ENCODE measurements at regions of chr2 and their contacts with region 1.

Region 1: DNA sequence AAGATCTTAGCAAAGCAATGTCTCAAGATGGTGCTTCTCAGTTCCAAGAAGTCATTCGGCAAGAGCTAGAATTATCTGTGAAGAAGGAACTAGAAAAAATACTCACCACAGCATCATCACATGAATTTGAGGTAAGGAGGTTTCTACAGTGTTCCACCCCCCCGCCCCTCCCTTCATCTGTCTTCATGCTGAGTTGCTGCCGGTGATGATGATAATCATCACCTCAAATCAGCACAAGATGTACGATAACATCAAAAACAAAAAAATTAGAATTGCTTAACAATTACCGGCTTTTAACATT is 14.6 kb downstream of the UGP2 start:
- DNase-seq: peak; percentile 72
- H3K4me3 Mint-ChIP-seq: peak overlapping the region; percentile 64
- H3K27ac Mint-ChIP-seq: peak overlapping the region; percentile 97
- H3K4me1 Mint-ChIP-seq: peaks cover 81% of the 10 kb centered on the region
- H3K27me3 Mint-ChIP-seq: no peaks in the 10 kb centered on the region

Region 2: DNA sequence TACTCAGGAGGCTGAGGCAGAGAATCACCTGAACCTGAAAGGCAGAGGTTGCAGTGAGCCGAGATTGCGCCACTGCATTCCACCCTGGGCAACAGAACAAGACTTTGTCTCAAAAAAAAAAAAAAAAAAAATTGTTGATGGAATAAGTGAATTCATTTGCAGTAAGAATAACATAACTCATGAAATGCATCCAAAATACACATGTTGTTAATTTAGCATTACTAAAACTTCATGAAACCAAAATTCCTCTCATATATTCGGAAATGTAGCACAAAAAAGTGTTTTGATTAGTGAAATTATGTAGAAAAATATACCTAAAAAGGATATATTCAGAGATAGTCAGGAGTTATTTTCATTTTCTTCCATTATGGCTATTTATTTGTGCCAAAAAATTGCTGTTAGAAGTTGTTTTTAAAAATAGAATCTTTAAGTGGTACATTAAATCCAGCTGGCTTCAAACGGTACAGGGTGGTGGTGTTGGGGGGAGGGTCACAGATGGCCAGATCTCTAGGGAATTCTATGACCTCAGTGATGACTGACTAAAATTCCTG is 92.8 kb before region 1 on chr2:
- CTCF ChIA-PET with region 1: no interaction called
- POLR2A ChIA-PET with region 1: no interaction called
- DNase-seq: no peak
- H3K4me3 Mint-ChIP-seq: no peak overlapping the region
- H3K27ac Mint-ChIP-seq: no peak overlapping the region
- H3K4me1 Mint-ChIP-seq: no peaks in the 10 kb centered on the region
- H3K27me3 Mint-ChIP-seq: no peaks in the 10 kb centered on the region

Region 3: DNA sequence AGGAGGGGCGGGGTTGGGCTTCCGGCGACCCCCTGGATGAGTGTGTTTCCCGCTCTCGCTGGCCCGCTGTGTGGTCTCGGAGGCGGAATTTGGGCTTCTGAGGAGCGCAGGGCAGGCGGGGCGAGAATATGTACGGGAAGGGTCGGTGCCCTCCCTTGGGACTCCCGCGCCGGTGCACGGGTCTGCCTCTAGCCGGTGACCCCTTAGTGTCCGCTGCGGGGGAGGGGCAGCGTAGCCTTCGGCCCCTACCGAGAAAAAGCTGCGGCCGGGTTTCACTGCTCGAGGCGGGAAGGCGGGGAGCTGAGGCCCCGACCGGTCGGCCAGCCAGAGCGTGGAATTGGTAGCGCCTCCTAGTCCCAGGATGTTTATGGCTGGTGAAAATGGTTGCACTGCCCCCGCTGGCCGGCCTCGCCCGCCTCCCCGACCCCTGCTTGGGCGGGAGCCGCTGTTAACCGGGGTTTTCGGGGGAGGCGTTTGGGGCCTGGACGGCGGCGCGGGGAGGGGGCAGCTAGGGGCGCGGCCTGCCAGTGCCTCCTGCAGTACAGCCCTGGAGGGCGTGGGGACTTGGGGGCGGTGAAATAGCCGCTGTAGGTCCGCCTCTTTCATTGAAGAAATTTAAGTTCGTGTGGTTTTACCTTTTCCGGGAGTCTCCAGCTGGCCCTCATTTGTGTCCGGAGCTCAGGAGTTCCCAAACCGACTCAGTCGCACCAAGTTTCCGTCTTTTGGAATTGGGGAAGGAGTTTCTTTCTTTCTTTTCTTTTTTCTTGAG is 14.8 kb before region 1 on chr2 and contains the start of gene UGP2:
- CTCF ChIA-PET with region 1: interaction called, 27 read pairs
- POLR2A ChIA-PET with region 1: interaction called, 36 read pairs
- DNase-seq: peak; percentile 92
- H3K4me3 Mint-ChIP-seq: peak within 1 kb of the TSS; percentile 97
- H3K27ac Mint-ChIP-seq: peak within 1 kb of the TSS; percentile 96
- H3K4me1 Mint-ChIP-seq: peaks cover 52% of the 10 kb centered on the region
- H3K27me3 Mint-ChIP-seq: peaks cover 7% of the 10 kb centered on the region
- total RNA-seq, gene UGP2: 140 to 181 TPM

Region 4: DNA sequence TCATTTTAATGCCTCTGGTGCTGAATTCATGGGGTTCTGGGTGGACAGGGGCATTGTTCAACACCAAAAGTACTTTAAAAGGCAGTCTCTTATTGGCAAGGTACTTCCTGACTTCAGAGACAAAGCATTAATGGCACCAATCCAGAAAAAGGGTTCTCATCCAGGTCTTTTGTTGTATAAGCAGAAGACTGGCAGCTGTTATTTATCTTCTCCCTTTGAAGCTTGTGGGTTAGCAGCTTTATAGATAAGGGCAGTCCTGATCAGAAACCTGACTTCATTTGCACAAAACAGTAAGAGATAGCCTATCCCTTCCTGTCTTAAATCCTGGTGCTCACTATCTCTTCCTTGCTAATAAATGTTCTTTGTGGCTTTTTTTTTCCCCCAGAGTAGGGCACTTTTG is 94.2 kb after region 1 on chr2:
- CTCF ChIA-PET with region 1: no interaction called
- POLR2A ChIA-PET with region 1: no interaction called
- DNase-seq: no peak
- H3K4me3 Mint-ChIP-seq: no peak overlapping the region
- H3K27ac Mint-ChIP-seq: no peak overlapping the region
- H3K4me1 Mint-ChIP-seq: peaks cover 5% of the 10 kb centered on the region
- H3K27me3 Mint-ChIP-seq: no peaks in the 10 kb centered on the region